GM18951 (cell line): ENCODE measurements at regions of chr3 and their contacts with region 1.

Region 1: DNA sequence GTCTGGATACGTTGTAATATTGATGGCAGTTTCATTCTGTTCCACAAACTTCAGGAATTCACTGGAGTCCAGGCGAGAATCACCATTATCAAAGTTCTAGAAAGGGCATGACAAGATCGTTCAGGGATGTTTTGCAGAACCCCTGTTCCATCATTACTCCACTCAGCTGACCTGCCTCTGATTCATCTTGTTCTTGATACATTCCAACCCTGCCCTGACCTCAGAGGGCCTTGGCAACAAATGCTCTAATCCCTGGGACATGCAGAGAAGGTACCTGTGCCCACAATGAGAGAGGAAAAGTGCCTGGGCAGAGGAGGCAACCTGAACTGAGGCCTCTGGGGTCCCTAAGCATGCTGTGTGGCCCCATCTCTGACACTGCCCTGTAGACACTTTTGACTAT is 45.9 kb downstream of the FSTL1 start:
- POLR2A ChIP-seq: no peak

Region 2: DNA sequence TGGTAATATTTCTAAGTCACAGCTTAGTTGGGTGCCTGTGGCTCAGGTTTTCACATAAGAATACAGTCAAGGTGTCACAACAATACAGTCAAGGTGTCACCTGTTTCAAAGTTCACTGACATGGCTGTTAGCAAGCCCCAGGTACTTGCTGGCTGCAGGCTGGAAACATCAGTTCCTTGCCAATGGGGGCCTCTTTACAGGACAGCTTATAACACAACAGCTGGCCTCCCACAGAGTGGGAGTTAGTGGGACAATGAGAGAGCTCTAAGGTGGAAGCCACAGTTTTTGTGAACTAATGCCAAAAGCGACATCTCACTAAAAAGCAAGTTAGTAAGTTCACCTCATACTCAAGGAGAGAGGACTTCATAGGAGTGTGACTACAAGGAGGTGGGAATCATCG is 165.2 kb before region 1 on chr3:
- in situ Hi-C with region 1: loop called (anchors 5 kb)
- POLR2A ChIP-seq: no peak

Region 3: DNA sequence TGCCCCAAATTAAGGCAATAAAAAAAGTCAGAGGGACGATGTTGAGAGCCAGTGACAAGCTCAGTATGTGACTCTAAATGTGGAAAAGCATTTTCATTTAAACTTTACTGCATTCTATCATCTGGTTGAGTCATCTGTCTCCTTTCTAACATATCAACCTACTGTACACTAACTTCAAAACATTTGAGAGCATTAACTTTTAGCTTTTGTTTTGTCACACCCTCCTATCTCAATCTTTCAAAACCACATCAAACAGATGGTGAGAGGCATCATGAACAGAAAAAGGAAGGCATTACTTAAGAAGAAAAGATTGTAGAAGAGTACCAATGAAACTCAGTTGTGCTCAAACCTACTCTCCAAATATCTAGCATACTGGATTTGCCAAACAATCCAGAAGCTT is 60.5 kb before region 1 on chr3:
- in situ Hi-C with region 1: no loop called
- POLR2A ChIP-seq: no peak